B cell (primary cell): ENCODE measurements at regions of chr4 and their contacts with region 1.

Region 1: GRCh38 chr4:103019308-103020124 is at the start of gene SLC9B1:
- DNase-seq: peak; percentile 94
- ATAC-seq: peak; percentile 98
- H3K4me3 ChIP-seq: peak within 1 kb of the TSS; percentile 65 to 92 (median 82)
- H3K4me3 Mint-ChIP-seq: peak within 1 kb of the TSS; percentile 96
- H3K27ac ChIP-seq: peak within 1 kb of the TSS; percentile 94 to 98
- H3K27ac Mint-ChIP-seq: peak within 1 kb of the TSS; percentile 95
- H3K4me1 ChIP-seq: peaks cover 17 to 21% of the 10 kb centered on the region in 2 donors
- H3K4me1 Mint-ChIP-seq: peaks cover 27% of the 10 kb centered on the region
- H3K27me3 ChIP-seq: no peaks in the 10 kb centered on the region
- H3K27me3 Mint-ChIP-seq: no peaks in the 10 kb centered on the region
- CTCF ChIP-seq: no peak
- total RNA-seq, gene SLC9B1: 1.9 and 2.1 TPM in 2 replicates

Region 2: DNA sequence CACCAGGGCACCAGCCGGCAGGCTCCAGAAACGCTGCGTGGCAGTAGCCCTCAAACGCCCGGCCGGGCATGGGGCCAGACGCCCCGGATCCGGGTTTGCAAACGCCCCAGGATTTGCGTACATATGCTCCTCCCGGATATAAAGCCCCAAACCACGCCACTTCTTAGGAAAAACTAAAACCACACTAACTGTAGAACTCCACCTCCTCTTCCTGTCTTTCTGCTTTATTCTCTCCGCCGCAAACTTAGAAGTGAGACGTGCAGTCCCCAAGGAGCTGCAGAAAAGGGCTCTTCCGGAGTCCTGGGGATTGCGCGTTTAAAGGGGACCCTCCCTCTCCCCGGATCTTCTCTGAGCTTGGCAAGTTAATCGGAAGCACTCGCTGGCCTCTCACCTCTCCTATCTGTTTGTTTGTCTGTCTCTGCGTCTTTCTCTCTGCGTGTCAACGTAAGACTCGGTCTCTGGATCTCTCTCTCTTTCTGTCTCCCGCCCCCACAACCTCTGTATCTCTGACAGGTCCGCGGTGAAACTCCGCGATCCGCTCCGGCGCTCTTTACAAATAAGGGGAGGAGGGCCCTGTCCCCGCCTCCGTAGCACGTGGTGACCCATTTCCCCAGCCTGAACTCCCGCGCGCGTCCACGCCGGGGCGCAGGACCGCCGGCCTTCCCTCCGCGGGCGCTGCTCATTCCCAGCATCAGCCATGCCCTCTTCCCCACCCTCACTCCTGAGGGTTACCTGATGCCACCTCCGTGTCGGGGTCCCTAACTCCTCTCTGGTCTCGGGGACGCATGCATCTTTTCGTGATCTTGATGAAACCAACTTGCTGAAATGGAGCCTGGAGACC is 674.3 kb before region 1 on chr4 and contains the start of gene SLC39A8:
- CTCF ChIA-PET with region 1: no interaction called
- POLR2A ChIA-PET with region 1: no interaction called
- intact Hi-C with region 1: loop called (anchors 2 kb)
- DNase-seq: peak; percentile 93
- ATAC-seq: peak; percentile 88
- H3K4me3 ChIP-seq: peak within 1 kb of the TSS; percentile 75 to 91 (median 84)
- H3K4me3 Mint-ChIP-seq: peak within 1 kb of the TSS; percentile 87
- H3K27ac ChIP-seq: peak within 1 kb of the TSS; percentile 88 to 90
- H3K27ac Mint-ChIP-seq: peak within 1 kb of the TSS; percentile 90
- H3K4me1 ChIP-seq: peaks cover 21 to 23% of the 10 kb centered on the region in 2 donors
- H3K4me1 Mint-ChIP-seq: peaks cover 24% of the 10 kb centered on the region
- H3K27me3 ChIP-seq: no peaks in the 10 kb centered on the region
- H3K27me3 Mint-ChIP-seq: no peaks in the 10 kb centered on the region
- CTCF ChIP-seq: peak; percentile 91
- total RNA-seq, gene SLC39A8: 8.4 and 10.2 TPM in 2 replicates

Region 3: DNA sequence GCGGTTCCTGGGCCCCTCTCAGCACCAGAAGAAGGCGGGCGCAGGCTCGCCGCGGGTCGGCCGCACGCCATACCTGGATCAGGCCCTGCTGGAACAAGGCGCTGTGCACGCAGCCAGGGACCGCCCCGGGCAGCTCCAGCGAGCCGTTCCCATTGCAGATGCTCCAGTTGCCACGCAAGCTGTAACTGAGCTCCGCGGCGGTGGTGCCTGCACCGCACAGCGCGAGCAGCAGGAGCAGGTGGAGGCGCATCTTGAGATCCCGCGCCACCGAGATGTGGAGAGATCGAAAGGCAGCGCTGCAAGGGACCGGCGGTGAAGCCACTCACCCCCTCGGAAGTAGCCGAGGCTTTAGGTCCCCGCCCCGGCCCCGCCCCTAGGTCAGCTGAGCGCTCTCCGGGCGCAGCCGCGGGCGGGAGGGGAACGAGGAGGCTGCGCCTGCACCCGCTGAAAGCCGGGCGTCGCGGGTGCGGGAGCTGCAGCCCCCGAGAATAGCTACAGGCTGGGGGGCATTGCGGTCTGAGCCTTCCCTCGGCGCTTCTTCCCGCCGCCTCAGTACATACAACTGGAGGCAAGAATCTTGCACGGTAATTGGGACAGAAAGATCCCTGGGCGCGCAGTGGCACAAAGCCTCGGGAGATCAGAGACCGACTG is 258.7 kb before region 1 on chr4 and contains the start of gene MANBA:
- CTCF ChIA-PET with region 1: no interaction called
- POLR2A ChIA-PET with region 1: interaction called, 7 read pairs
- intact Hi-C with region 1: loop called (anchors 2 kb)
- DNase-seq: peak; percentile 93
- ATAC-seq: peak; percentile 75
- H3K4me3 ChIP-seq: peak within 1 kb of the TSS; percentile 69 to 99 (median 87)
- H3K4me3 Mint-ChIP-seq: peak within 1 kb of the TSS; percentile 96
- H3K27ac ChIP-seq: peak within 1 kb of the TSS; percentile 98
- H3K27ac Mint-ChIP-seq: peak within 1 kb of the TSS; percentile 97
- H3K4me1 ChIP-seq: peaks cover 29 to 35% of the 10 kb centered on the region in 2 donors
- H3K4me1 Mint-ChIP-seq: peaks cover 51% of the 10 kb centered on the region
- H3K27me3 ChIP-seq: no peaks in the 10 kb centered on the region
- H3K27me3 Mint-ChIP-seq: no peaks in the 10 kb centered on the region
- CTCF ChIP-seq: no peak
- total RNA-seq, gene MANBA: 119 and 132 TPM in 2 replicates

Region 4: GRCh38 chr4:102868781-102869568 is 150.5 kb before region 1 on chr4 and contains the start of gene CISD2:
- CTCF ChIA-PET with region 1: no interaction called
- POLR2A ChIA-PET with region 1: interaction called, 5 read pairs
- intact Hi-C with region 1: loop called (anchors 1 kb)
- DNase-seq: peak; percentile 95
- ATAC-seq: peak; percentile 87
- H3K4me3 ChIP-seq: peak within 1 kb of the TSS; percentile 75 to 89 (median 84)
- H3K4me3 Mint-ChIP-seq: peak within 1 kb of the TSS; percentile 93
- H3K27ac ChIP-seq: peak within 1 kb of the TSS; percentile 97
- H3K27ac Mint-ChIP-seq: peak within 1 kb of the TSS; percentile 97
- H3K4me1 ChIP-seq: peaks cover 22 to 23% of the 10 kb centered on the region in 2 donors
- H3K4me1 Mint-ChIP-seq: peaks cover 52% of the 10 kb centered on the region
- H3K27me3 ChIP-seq: no peaks in the 10 kb centered on the region
- H3K27me3 Mint-ChIP-seq: no peaks in the 10 kb centered on the region
- CTCF ChIP-seq: no peak
- total RNA-seq, gene CISD2: 15.1 and 16.0 TPM in 2 replicates

Region 5: DNA sequence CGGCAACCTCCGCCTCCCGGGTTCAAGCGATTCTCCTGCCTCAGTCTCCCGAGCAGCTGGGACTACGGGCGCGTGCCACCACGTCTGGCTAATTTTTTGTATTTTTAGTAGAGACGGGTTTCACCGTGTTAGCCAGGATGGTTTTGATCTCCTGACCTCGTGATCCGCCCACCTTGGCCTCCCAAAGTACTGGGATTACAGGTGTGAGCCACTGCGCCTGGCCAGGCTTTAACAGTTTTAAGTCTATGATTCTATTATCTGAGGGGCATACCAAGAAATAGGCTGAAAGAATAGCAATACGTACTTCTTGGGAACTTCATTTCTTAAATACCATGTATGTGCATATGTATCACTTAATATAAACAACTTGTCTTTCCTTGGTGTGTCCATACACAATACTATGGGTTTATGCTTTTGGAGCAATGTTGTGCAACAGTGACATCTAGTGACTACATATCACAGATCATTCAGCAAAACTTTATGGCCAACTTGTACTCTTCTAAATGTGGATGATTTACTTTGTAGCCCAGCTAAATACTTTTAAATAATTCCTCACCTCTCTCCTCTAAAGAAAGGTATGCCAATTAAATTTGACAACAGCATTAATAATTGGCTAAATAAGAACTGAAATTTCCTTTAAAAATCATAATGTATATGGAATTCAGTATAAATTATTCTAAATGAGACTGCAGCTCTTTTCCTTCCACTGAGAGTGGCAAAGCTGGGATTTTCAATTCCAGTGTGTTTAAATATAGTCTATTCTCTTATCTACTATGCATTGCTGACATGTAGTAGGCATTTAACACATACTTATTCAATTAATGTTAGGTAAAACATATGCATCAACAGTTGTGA is 10.4 kb before region 1 on chr4:
- CTCF ChIA-PET with region 1: interaction called, 10 read pairs
- POLR2A ChIA-PET with region 1: no interaction called
- intact Hi-C with region 1: no loop called
- DNase-seq: peak; percentile 79
- ATAC-seq: peak; percentile 67
- H3K4me3 ChIP-seq: no peak overlapping the region
- H3K4me3 Mint-ChIP-seq: no peak overlapping the region
- H3K27ac ChIP-seq: no peak overlapping the region
- H3K27ac Mint-ChIP-seq: no peak overlapping the region
- H3K4me1 ChIP-seq: no peaks in the 10 kb centered on the region
- H3K4me1 Mint-ChIP-seq: no peaks in the 10 kb centered on the region
- H3K27me3 ChIP-seq: no peaks in the 10 kb centered on the region
- H3K27me3 Mint-ChIP-seq: no peaks in the 10 kb centered on the region
- CTCF ChIP-seq: peak; percentile 87

Region 6: GRCh38 chr4:103075901-103076739 is 56.6 kb after region 1 on chr4:
- CTCF ChIA-PET with region 1: no interaction called
- POLR2A ChIA-PET with region 1: interaction called, 4 read pairs
- intact Hi-C with region 1: loop called (anchors 1 kb)
- DNase-seq: peak; percentile 78
- ATAC-seq: peak; percentile 55
- H3K4me3 ChIP-seq: peak overlapping the region; percentile 65 to 83 (median 80)
- H3K4me3 Mint-ChIP-seq: peak overlapping the region; percentile 82
- H3K27ac ChIP-seq: peak overlapping the region; percentile 92
- H3K27ac Mint-ChIP-seq: peak overlapping the region; percentile 89
- H3K4me1 ChIP-seq: peaks cover 27 to 31% of the 10 kb centered on the region in 2 donors
- H3K4me1 Mint-ChIP-seq: peaks cover 35% of the 10 kb centered on the region
- H3K27me3 ChIP-seq: no peaks in the 10 kb centered on the region
- H3K27me3 Mint-ChIP-seq: no peaks in the 10 kb centered on the region
- CTCF ChIP-seq: peak; percentile 12

Region 7: DNA sequence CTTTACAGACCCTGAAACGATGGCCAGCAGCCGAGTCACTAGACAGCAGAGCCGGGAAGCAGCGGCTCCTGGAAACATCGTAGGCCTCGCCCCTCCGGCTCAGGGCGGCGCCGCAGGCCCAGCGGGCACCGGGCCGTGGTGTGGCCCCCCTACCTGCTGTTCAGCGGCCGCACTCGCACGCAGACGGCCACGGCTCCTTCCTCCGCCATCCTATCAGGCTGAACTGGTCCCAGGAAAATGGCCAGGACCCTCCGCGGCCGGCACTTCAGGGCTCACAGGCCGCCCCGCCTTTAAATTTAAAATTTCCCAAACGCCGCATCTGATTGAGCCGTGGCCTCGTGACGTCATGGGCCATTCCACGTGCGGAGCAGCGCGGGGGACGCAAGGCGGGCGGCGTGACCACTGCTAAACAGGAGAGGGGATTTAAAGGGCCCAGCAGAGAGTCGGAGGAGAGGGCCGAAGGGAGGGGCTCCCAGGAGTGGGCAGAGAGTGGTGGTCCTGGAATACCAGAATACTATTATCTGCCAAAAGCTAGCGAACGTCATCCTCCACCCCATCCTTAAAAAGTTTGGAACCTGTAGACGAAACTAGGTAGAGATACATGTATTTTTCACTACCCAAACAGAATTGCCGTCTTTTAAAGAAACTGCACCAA is 178.7 kb after region 1 on chr4 and contains the start of gene CENPE:
- CTCF ChIA-PET with region 1: no interaction called
- POLR2A ChIA-PET with region 1: no interaction called
- intact Hi-C with region 1: loop called (anchors 2 kb)
- DNase-seq: peak; percentile 94
- ATAC-seq: peak; percentile 88
- H3K4me3 ChIP-seq: peak within 1 kb of the TSS; percentile 59 to 95 (median 79)
- H3K4me3 Mint-ChIP-seq: peak within 1 kb of the TSS; percentile 94
- H3K27ac ChIP-seq: peak within 1 kb of the TSS; percentile 64 to 87
- H3K27ac Mint-ChIP-seq: peak within 1 kb of the TSS; percentile 96
- H3K4me1 ChIP-seq: peaks cover 9 to 10% of the 10 kb centered on the region in 2 donors
- H3K4me1 Mint-ChIP-seq: peaks cover 15% of the 10 kb centered on the region
- H3K27me3 ChIP-seq: peaks cover 0 to 7% (median 0%) of the 10 kb centered on the region in 4 experiments
- H3K27me3 Mint-ChIP-seq: peaks cover 12% of the 10 kb centered on the region
- CTCF ChIP-seq: no peak
- total RNA-seq, gene CENPE: 2.1 and 2.8 TPM in 2 replicates